ENCODE measurements at regions of chr3 and their contacts with region 1.

Region 1: GRCh38 chr3:115147329-115148141 is 447 bp upstream of the ZBTB20 start:
- DNase-seq: peak; percentile 98
- ATAC-seq: peak; percentile 92
- H3K4me3 ChIP-seq: peak overlapping the region; percentile 82 to 93 (median 89)
- H3K27ac ChIP-seq: peak overlapping the region; percentile 91
- H3K4me1 ChIP-seq: peaks cover 10% of the 10 kb centered on the region
- H3K27me3 ChIP-seq: no peaks in the 10 kb centered on the region; a peak in 1 of 5 replicates
- CTCF ChIP-seq: no peak
- EP300 ChIP-seq: peak in 1 of 2 experiments; percentile 31; a peak in 2 of 4 replicates
- POLR2A ChIP-seq: peak; percentile 41 to 62; a peak in 3 of 4 replicates
- RAD21 ChIP-seq: no peak

Region 2: DNA sequence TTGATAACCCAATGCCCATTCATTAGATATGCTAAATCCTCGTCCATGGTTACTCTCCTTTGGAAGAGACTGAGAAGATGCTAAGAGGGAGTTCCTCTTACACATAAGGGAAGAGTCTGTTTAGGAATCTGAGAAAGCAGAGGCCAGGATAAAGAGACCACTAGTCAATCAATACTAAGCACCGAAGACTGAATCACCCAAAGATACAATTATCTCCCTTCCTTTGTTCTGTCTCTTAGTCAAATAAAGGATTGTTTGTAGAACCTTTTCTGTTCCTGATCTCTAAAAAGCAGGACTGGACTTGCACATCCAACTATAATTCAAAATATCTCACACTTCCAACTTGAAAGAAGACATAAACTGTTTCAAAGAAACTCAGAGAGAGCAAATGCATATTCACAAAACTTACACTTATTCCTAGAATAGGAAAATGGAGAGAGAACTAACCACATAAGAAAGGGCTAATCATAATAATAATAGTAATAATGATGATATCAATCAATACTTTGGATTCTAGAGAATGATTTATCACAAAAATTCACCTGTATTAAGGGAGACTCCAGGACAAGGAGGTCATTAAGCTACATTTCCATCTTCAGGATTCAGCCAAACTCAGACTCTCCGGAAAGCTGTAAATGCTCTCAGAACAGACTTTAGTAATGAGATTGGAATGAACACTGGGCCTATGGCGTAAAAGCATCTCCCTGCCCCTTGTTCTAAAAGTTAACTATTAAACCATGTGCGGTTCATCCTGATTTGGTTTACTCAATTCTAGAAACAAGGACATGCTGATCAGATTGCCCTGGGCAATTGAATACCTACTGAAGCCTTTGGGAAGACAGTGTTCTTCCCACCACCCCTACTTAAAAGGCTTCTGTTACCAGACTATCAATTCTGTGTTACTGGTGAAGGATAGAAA is 402.0 kb before region 1 on chr3:
- CTCF ChIA-PET with region 1: no interaction called
- POLR2A ChIA-PET with region 1: no interaction called
- in situ Hi-C with region 1: no loop called
- intact Hi-C with region 1: loop called (anchors 5 kb)
- DNase-seq: peak; percentile 91
- ATAC-seq: peak; percentile 100
- H3K4me3 ChIP-seq: peak overlapping the region; percentile 39 to 55 (median 46); a peak in 5 of 6 replicates
- H3K27ac ChIP-seq: peak overlapping the region; percentile 54
- H3K4me1 ChIP-seq: peaks cover 46% of the 10 kb centered on the region
- H3K27me3 ChIP-seq: no peaks in the 10 kb centered on the region
- CTCF ChIP-seq: no peak
- EP300 ChIP-seq: peak in 1 of 2 experiments; percentile 56; a peak in 1 of 4 replicates
- POLR2A ChIP-seq: no peak
- RAD21 ChIP-seq: no peak

Region 3: DNA sequence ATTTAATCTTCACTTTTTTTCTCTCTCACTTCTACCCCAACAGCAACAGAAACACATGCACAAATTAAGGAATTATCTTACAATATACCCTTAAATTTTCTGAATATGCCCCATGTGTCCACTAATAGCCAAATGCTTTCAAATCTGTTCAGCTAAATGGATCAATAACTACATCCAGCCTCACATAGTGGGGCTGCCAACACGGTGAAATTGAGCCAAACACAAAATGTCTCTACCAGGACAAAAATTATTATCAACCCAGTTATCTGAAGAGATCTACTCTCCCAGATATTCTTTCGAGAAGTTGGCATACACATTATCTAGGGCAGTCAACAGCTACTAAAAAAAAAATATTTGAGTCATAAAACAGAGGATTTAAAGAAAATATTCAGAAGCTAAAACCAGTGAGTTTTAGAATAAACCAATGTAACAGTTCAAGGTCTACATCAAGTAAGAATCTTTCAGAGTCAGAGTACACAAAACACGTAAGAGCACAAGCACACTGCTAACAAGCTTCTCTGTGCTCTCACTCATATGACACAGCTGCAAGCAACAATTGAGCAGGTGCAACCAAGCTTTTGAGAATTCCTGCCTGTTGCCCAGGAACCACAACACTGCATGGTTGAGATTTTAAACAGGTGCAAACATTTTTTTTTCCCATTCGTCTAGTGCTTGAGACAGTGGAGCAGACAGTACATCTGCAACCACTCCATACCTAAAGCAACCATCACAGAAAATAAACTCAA is 248.2 kb before region 1 on chr3:
- CTCF ChIA-PET with region 1: no interaction called
- POLR2A ChIA-PET with region 1: no interaction called
- in situ Hi-C with region 1: no loop called
- intact Hi-C with region 1: loop called (anchors 5 kb)
- DNase-seq: peak; percentile 83
- ATAC-seq: peak; percentile 95
- H3K4me3 ChIP-seq: no peak overlapping the region; a peak in 1 of 6 replicates
- H3K27ac ChIP-seq: peak overlapping the region; percentile 69
- H3K4me1 ChIP-seq: peaks cover 39% of the 10 kb centered on the region
- H3K27me3 ChIP-seq: no peaks in the 10 kb centered on the region
- CTCF ChIP-seq: no peak
- EP300 ChIP-seq: peak in 1 of 2 experiments; percentile 44; a peak in 1 of 4 replicates
- POLR2A ChIP-seq: no peak
- RAD21 ChIP-seq: no peak

Region 4: GRCh38 chr3:115062412-115062956 is 85.1 kb before region 1 on chr3:
- CTCF ChIA-PET with region 1: no interaction called
- POLR2A ChIA-PET with region 1: no interaction called
- in situ Hi-C with region 1: no loop called
- intact Hi-C with region 1: no loop called
- DNase-seq: no peak
- ATAC-seq: no peak
- H3K4me3 ChIP-seq: no peak overlapping the region
- H3K27ac ChIP-seq: no peak overlapping the region
- H3K4me1 ChIP-seq: no peaks in the 10 kb centered on the region
- H3K27me3 ChIP-seq: no peaks in the 10 kb centered on the region
- CTCF ChIP-seq: no peak
- EP300 ChIP-seq: no peak
- POLR2A ChIP-seq: no peak
- RAD21 ChIP-seq: no peak

Region 5: GRCh38 chr3:115092220-115092791 is 55.2 kb before region 1 on chr3:
- CTCF ChIA-PET with region 1: no interaction called
- POLR2A ChIA-PET with region 1: interaction called, 6 read pairs
- in situ Hi-C with region 1: no loop called
- intact Hi-C with region 1: loop called (anchors 2 kb)
- DNase-seq: peak; percentile 34
- ATAC-seq: peak; percentile 100
- H3K4me3 ChIP-seq: no peak overlapping the region
- H3K27ac ChIP-seq: no peak overlapping the region
- H3K4me1 ChIP-seq: no peaks in the 10 kb centered on the region
- H3K27me3 ChIP-seq: no peaks in the 10 kb centered on the region
- CTCF ChIP-seq: peak; percentile 65
- EP300 ChIP-seq: no peak
- POLR2A ChIP-seq: no peak
- RAD21 ChIP-seq: no peak

Region 6: DNA sequence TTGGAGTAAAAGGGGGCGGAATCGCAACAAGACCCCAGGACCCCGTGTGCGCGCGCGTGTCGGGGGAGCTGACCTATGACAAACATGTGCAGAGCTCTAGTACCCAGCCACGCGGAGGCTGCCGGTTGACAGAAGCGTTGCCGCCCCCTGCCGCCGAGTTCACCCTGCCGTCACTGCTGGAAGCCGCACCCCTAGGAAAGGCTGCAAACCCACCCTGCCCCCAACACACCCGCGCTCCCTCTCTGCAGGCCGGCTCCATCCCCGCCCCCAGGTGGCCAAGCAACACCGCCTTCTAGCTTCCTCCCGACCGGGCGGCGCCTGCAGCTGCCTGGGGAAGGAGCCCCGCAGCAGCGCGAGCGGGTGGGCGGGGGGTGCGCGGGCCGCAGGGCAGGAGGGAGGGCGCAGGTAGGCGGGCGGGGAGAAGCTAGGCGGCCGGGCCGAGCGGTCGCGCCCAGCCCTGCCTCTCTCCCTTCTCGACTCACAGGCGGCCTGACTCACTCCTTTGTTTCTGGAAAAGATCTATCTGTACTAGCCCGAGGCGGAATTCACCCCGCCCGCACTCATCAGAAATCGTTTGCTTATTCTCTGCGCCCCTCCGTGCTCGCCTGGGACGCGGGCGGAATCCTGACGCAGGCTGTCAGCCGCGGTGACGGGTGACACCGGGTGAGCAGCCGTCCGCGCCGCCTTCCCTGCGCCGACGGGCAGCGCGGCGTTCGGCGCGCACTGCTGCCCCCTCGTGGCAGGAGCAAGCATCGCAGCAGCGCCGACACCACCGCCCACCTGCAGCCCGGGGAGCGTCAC is 636.6 kb after region 1 on chr3:
- CTCF ChIA-PET with region 1: no interaction called
- POLR2A ChIA-PET with region 1: interaction called, 4 read pairs
- in situ Hi-C with region 1: no loop called
- intact Hi-C with region 1: loop called (anchors 2 kb)
- DNase-seq: peak; percentile 87
- ATAC-seq: peak; percentile 96
- H3K4me3 ChIP-seq: peak overlapping the region; percentile 55 to 77 (median 70)
- H3K27ac ChIP-seq: peak overlapping the region; percentile 80
- H3K4me1 ChIP-seq: peaks cover 48% of the 10 kb centered on the region
- H3K27me3 ChIP-seq: no peaks in the 10 kb centered on the region
- CTCF ChIP-seq: peak; percentile 91
- EP300 ChIP-seq: peak in 1 of 2 experiments; percentile 61; a peak in 1 of 4 replicates
- POLR2A ChIP-seq: peak; percentile 14 to 64; a peak in 2 of 4 replicates
- RAD21 ChIP-seq: peak; percentile 91

Region 7: DNA sequence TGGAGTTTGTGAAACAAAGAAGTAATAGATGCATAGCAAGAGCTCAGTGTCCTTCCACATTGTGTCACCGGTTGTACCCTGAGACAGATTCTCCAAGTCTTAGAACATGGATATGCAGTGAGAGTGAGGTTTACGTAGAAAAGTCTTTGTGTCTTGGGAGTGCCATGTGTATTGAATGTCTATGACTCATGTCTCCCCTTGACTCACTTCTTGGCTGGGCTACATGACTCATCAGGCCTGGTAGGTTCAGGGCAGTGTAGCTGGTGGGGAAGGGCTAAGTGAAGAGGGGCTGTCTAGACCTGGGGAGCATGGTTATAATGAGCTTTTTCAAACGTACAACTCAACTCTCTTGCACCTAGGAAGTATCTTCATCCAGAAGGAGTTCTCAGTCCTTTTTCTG is 643.2 kb after region 1 on chr3:
- CTCF ChIA-PET with region 1: no interaction called
- POLR2A ChIA-PET with region 1: interaction called, 10 read pairs
- in situ Hi-C with region 1: no loop called
- intact Hi-C with region 1: loop called (anchors 2 kb)
- DNase-seq: peak; percentile 84
- ATAC-seq: peak; percentile 72
- H3K4me3 ChIP-seq: peak overlapping the region; percentile 69 to 80 (median 72)
- H3K27ac ChIP-seq: peak overlapping the region; percentile 86
- H3K4me1 ChIP-seq: peaks cover 58% of the 10 kb centered on the region
- H3K27me3 ChIP-seq: no peaks in the 10 kb centered on the region; a peak in 1 of 5 replicates
- CTCF ChIP-seq: no peak
- EP300 ChIP-seq: peak in 1 of 2 experiments; percentile 43; a peak in 1 of 4 replicates
- POLR2A ChIP-seq: 0 out of 4 replicates have a peak, but pooled peaks of 1 of the 2 experiments have one; percentile 1
- RAD21 ChIP-seq: no peak

Region 8: DNA sequence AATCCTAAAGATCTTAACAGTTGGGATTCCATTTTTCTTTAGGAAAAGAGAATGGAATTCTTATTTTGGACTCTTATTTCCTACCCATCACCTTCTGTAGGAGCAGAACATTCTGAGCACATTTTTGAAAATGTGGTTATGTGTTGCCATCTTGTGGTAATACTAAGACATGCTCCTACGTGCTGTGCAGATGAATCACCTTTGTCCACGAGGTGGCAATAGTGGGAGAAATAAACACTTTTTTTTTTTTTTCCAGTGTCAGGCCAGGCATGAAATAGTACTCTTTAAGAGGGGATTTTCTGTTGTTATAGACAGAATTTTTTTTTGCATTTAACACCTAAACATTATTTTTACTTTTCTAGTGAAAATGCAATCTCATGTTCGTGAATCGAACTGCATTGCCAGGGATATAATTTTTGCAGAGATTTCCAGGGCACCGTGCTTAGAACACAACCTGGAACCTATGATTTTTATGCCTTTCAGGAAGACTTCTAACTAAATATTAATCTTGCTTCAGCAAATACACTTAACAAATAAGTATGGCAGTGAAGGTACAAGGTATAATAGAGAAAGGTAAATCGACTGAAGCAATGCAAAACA is 672.4 kb after region 1 on chr3:
- CTCF ChIA-PET with region 1: no interaction called
- POLR2A ChIA-PET with region 1: no interaction called
- in situ Hi-C with region 1: no loop called
- intact Hi-C with region 1: loop called (anchors 2 kb)
- DNase-seq: peak; percentile 81
- ATAC-seq: peak; percentile 68
- H3K4me3 ChIP-seq: no peak overlapping the region
- H3K27ac ChIP-seq: no peak overlapping the region
- H3K4me1 ChIP-seq: peaks cover 49% of the 10 kb centered on the region
- H3K27me3 ChIP-seq: no peaks in the 10 kb centered on the region
- CTCF ChIP-seq: peak; percentile 95
- EP300 ChIP-seq: 0 out of 4 replicates have a peak, but pooled peaks of 1 of the 2 experiments have one; percentile 19
- POLR2A ChIP-seq: no peak
- RAD21 ChIP-seq: peak; percentile 77

Measured in HepG2 (cell line).